ENCODE measurements at regions of chr1 and their contacts with region 1.

Region 1: DNA sequence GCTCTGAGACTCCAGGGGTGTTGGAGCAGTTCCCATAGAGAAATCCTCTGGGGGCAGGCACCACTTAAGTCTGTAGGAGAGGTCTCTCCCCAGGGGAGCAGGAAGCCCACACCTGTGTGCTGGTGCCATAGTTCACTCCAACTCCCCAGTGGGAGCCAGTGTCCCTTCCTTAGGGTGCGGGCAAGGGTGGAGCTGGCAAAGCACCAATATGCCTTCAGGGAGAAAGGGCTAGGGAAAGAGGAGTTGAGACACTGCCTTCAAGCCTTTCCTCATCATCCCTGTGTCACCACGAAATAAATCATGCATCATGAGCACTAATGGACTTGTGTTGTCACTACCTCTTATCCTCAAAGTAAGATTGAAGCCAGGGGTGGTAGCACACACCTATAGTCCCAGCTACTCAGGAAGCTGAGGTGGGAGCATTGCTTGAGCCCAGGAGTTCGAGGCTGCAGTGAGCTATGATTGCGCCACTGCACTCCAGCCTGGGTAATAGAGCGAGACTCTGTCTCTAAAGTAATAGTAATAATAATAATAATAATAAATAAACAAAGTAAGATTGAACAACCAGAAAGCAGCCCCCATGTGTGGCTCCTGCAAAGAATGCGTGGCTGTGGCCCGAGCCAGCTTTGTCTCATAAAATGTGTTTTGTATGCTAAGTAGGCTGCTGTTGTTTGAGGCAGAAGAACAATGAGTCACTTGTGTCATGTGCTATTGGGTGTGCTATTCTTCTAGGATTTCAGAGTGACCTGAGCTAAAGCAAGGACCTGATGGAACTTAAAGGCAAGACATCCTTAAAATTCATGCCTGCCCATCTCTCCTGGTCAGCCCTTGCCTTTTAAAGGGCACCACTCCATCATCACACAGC is 6.7 kb upstream of the TIE1 start:
- DNase-seq: no peak
- H3K4me3 Mint-ChIP-seq: no peak overlapping the region
- H3K27ac Mint-ChIP-seq: peak overlapping the region; percentile 73
- H3K4me1 Mint-ChIP-seq: peaks cover 22% of the 10 kb centered on the region
- H3K27me3 Mint-ChIP-seq: no peaks in the 10 kb centered on the region

Region 2: GRCh38 chr1:43238085-43238484 is 56.0 kb before region 1 on chr1:
- intact Hi-C with region 1: loop called (anchors 2 kb)
- DNase-seq: peak; percentile 13
- H3K4me3 Mint-ChIP-seq: no peak overlapping the region
- H3K27ac Mint-ChIP-seq: peak overlapping the region; percentile 30
- H3K4me1 Mint-ChIP-seq: peaks cover 17% of the 10 kb centered on the region
- H3K27me3 Mint-ChIP-seq: peaks cover 2% of the 10 kb centered on the region

Region 3: GRCh38 chr1:43274125-43274803 is 19.9 kb before region 1 on chr1:
- intact Hi-C with region 1: loop called (anchors 2 kb)
- DNase-seq: peak; percentile 32
- H3K4me3 Mint-ChIP-seq: peak overlapping the region; percentile 20
- H3K27ac Mint-ChIP-seq: peak overlapping the region; percentile 96
- H3K4me1 Mint-ChIP-seq: peaks cover 30% of the 10 kb centered on the region
- H3K27me3 Mint-ChIP-seq: peaks cover 15% of the 10 kb centered on the region

Region 4: DNA sequence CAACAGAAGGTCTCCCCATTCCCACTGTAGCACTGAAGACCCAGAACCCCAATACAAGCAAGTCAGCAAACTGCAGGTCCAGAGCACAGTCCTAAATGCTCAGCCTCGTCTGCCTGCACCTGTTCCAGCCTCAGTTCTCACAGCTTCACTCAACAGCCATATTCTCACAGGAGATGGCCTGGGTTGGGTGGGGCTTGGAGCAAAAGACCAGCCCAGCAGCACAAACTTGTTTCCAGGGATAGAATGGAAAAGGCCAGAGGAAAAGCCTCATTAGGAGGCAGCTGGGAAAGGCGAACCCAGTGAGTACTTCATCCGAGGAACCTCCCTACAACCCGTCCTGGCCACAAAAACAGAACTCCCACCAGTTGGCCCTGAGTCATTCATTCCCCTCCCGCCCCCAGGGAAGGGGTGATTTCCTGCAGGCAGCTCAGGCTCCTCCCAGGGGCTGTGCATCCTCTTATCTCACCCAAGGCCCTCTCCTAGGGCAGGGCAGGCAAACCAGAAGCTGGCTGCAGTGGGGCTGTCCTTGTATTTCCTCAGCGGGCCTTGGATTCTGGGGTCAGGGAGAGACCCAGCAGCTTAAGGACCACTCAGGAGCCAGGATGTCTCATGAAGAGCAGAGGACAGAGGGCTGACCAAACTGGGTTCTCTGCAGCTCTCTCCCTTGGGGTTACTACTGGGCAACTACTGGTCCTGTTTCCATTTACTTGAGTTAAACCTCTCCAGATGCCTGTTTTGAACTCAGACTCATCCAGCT is 36.0 kb after region 1 on chr1:
- intact Hi-C with region 1: loop called (anchors 2 kb)
- DNase-seq: peak; percentile 14
- H3K4me3 Mint-ChIP-seq: peak overlapping the region; percentile 2
- H3K27ac Mint-ChIP-seq: peak overlapping the region; percentile 80
- H3K4me1 Mint-ChIP-seq: peaks cover 28% of the 10 kb centered on the region
- H3K27me3 Mint-ChIP-seq: peaks cover 3% of the 10 kb centered on the region

Region 5: DNA sequence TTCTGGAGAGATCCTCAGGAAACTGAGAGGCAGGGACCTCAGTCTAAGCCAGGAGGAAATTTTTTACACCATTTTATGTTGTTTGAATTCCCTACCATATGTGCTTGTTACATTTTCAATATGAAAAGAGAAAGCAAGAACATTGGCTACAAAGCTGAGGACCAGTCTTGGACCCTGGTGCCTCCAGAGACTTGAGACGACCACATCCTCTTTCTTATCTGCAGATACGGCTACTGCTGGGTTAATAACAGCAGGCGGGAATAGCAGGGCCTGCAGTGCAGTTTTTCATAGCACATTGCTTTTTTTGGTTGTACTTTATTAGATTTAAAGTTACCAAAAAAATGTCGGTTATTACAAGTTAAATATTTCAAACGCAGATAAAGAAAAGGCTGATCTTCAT is 359.8 kb after region 1 on chr1:
- intact Hi-C with region 1: no loop called
- DNase-seq: no peak
- H3K4me3 Mint-ChIP-seq: no peak overlapping the region
- H3K27ac Mint-ChIP-seq: no peak overlapping the region
- H3K4me1 Mint-ChIP-seq: peaks cover 27% of the 10 kb centered on the region
- H3K27me3 Mint-ChIP-seq: no peaks in the 10 kb centered on the region